Activated B cell treated with CpG ODN at 0.5 μM for 24 hours (primary cell): ENCODE measurements at regions of chr16 and their contacts with region 1.

Region 1: GRCh38 chr16:25051406-25052150 is 36.4 kb upstream of the ARHGAP17 start:
- DNase-seq: no peak
- ATAC-seq: no peak
- H3K4me3 Mint-ChIP-seq: no peak overlapping the region
- H3K27ac Mint-ChIP-seq: peak overlapping the region; percentile 54
- H3K4me1 Mint-ChIP-seq: peaks cover 49% of the 10 kb centered on the region
- H3K27me3 Mint-ChIP-seq: no peaks in the 10 kb centered on the region
- CTCF ChIP-seq: no peak

Region 2: GRCh38 chr16:24993722-24994686 is 57.6 kb before region 1 on chr16:
- CTCF ChIA-PET with region 1: no interaction called
- POLR2A ChIA-PET with region 1: interaction called, 11 read pairs
- intact Hi-C with region 1: no loop called
- DNase-seq: no peak
- ATAC-seq: no peak
- H3K4me3 Mint-ChIP-seq: peak overlapping the region; percentile 36
- H3K27ac Mint-ChIP-seq: peak overlapping the region; percentile 81
- H3K4me1 Mint-ChIP-seq: peaks cover 97% of the 10 kb centered on the region
- H3K27me3 Mint-ChIP-seq: no peaks in the 10 kb centered on the region
- CTCF ChIP-seq: no peak

Region 3: GRCh38 chr16:25066747-25067631 is 15.4 kb after region 1 on chr16:
- CTCF ChIA-PET with region 1: interaction called, 3 read pairs
- POLR2A ChIA-PET with region 1: interaction called, 27 read pairs
- intact Hi-C with region 1: no loop called
- DNase-seq: peak; percentile 78
- ATAC-seq: peak; percentile 94
- H3K4me3 Mint-ChIP-seq: peak overlapping the region; percentile 90
- H3K27ac Mint-ChIP-seq: peak overlapping the region; percentile 90
- H3K4me1 Mint-ChIP-seq: peaks cover 55% of the 10 kb centered on the region
- H3K27me3 Mint-ChIP-seq: no peaks in the 10 kb centered on the region
- CTCF ChIP-seq: no peak

Region 4: GRCh38 chr16:25126820-25127232 is 75.2 kb after region 1 on chr16:
- CTCF ChIA-PET with region 1: no interaction called
- POLR2A ChIA-PET with region 1: no interaction called
- intact Hi-C with region 1: loop called (anchors 1 kb)
- DNase-seq: no peak
- ATAC-seq: no peak
- H3K4me3 Mint-ChIP-seq: no peak overlapping the region
- H3K27ac Mint-ChIP-seq: no peak overlapping the region
- H3K4me1 Mint-ChIP-seq: peaks cover 7% of the 10 kb centered on the region
- H3K27me3 Mint-ChIP-seq: no peaks in the 10 kb centered on the region
- CTCF ChIP-seq: no peak

Region 5: DNA sequence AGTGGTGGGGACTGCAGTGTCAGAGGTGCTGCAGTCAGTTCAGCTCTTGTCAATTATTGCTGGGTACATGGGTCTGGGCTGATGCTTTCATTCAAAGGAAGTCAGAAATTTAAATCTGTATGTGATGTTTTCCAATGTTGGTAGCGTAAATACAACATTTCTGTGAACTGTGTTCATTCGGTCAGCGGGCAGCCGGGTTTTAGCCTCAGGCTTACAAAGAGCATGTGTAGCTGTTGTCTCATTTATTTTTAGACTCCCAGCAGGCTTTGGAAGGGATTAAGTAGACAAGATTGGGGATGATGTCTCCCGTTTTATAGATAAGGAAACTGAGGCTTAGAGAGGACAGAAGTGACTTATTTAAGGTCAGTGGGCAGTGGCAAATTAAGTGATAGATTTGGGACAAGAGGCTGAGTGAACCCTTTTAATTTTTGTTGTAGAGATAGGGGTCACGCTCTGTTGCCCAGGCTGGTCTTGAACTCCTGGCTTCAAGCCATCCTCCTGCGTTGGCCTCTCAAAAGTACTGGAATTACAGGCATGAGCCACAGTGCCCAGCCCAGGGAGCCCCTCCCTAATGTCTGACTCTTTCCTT is 173.2 kb after region 1 on chr16:
- CTCF ChIA-PET with region 1: interaction called, 24 read pairs
- POLR2A ChIA-PET with region 1: interaction called, 5 read pairs
- intact Hi-C with region 1: loop called (anchors 1 kb)
- DNase-seq: no peak
- ATAC-seq: no peak
- H3K4me3 Mint-ChIP-seq: no peak overlapping the region
- H3K27ac Mint-ChIP-seq: no peak overlapping the region
- H3K4me1 Mint-ChIP-seq: no peaks in the 10 kb centered on the region
- H3K27me3 Mint-ChIP-seq: no peaks in the 10 kb centered on the region
- CTCF ChIP-seq: no peak